A673 (cell line): ENCODE measurements at regions of chr16 and their contacts with region 1.

Region 1: DNA sequence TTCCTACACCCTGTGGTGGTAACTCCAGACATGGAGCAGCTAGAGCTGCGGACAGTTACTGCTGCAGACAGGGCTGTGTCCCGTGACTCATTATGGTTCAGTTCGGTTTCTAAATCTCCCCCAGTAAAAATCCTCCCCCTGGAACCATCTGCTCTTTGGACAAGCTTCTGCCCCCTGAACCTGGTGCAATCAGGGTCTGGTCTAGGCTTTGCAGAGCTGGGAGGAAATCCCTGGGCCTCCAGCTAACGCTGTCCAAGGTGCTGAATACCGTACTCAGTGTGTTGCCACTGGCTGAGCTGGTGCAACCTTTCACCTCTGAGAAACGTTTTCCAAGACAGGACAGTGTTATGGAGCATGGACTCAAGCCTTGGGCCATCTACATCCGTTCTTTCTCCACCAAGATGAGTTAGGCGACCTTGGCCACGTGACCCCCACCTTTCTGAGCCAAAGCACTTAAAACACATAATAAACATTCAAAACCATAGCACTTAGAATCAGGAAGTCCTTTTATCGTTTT is 142.0 kb downstream of the CPPED1 start:
- DNase-seq: peak; percentile 25
- H3K4me3 ChIP-seq: no peak overlapping the region
- H3K27ac ChIP-seq: no peak overlapping the region
- H3K4me1 ChIP-seq: no peaks in the 10 kb centered on the region
- H3K27me3 ChIP-seq: no peaks in the 10 kb centered on the region
- CTCF ChIP-seq: no peak

Region 2: GRCh38 chr16:12590963-12591362 is 70.8 kb before region 1 on chr16:
- CTCF ChIA-PET with region 1: no interaction called
- POLR2A ChIA-PET with region 1: no interaction called
- intact Hi-C with region 1: no loop called
- DNase-seq: no peak
- H3K4me3 ChIP-seq: no peak overlapping the region
- H3K27ac ChIP-seq: no peak overlapping the region
- H3K4me1 ChIP-seq: no peaks in the 10 kb centered on the region
- H3K27me3 ChIP-seq: no peaks in the 10 kb centered on the region
- CTCF ChIP-seq: no peak

Region 3: GRCh38 chr16:12614662-12615278 is 46.9 kb before region 1 on chr16:
- CTCF ChIA-PET with region 1: no interaction called
- POLR2A ChIA-PET with region 1: no interaction called
- intact Hi-C with region 1: no loop called
- DNase-seq: no peak
- H3K4me3 ChIP-seq: no peak overlapping the region
- H3K27ac ChIP-seq: no peak overlapping the region
- H3K4me1 ChIP-seq: no peaks in the 10 kb centered on the region
- H3K27me3 ChIP-seq: no peaks in the 10 kb centered on the region
- CTCF ChIP-seq: no peak

Region 4: GRCh38 chr16:12625068-12625467 is 36.6 kb before region 1 on chr16:
- CTCF ChIA-PET with region 1: no interaction called
- POLR2A ChIA-PET with region 1: no interaction called
- intact Hi-C with region 1: no loop called
- DNase-seq: no peak
- H3K4me3 ChIP-seq: no peak overlapping the region
- H3K27ac ChIP-seq: no peak overlapping the region
- H3K4me1 ChIP-seq: no peaks in the 10 kb centered on the region
- H3K27me3 ChIP-seq: no peaks in the 10 kb centered on the region
- CTCF ChIP-seq: no peak

Region 5: DNA sequence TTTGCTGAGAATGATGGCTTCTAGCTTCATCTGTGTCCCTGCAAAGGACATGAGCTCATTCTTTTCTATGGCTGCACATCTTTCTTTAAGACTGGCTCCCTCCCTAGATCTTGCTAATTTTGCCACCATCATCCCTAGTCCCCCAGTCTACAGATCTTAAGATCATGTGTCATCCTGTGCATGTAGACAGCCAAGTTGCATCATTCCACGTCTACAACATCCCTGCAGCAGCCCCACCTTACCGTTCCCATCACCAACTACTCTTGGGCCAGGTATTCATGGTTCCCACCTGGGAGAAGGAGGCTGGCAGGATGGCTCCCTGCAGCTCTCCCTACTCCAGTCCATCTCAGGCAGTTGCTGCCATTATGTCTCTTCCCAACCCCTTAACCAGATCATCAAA is 129.6 kb after region 1 on chr16:
- CTCF ChIA-PET with region 1: no interaction called
- POLR2A ChIA-PET with region 1: interaction called, 10 read pairs
- intact Hi-C with region 1: no loop called
- DNase-seq: no peak
- H3K4me3 ChIP-seq: no peak overlapping the region
- H3K27ac ChIP-seq: no peak overlapping the region
- H3K4me1 ChIP-seq: no peaks in the 10 kb centered on the region
- H3K27me3 ChIP-seq: no peaks in the 10 kb centered on the region
- CTCF ChIP-seq: no peak

Region 6: DNA sequence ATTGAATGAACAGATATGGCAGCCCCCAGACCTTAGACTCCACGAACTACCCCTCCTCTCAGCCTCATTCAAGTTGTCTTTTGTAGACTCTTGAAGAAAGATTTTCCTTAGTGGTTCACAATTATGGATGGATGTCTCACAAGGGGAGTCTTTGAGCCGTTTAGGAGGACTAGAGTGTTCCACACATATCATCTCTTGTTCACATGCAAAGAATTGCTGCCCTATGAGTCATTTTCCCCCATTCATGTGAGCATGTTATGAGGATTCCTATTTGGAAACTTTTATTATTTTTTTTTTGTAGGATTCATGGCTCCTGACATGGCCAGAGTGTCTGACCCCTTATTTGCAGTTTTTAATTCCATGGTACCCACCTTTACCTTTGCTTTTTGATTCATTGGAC is 476.8 kb after region 1 on chr16:
- CTCF ChIA-PET with region 1: no interaction called
- POLR2A ChIA-PET with region 1: no interaction called
- intact Hi-C with region 1: no loop called
- DNase-seq: no peak
- H3K4me3 ChIP-seq: no peak overlapping the region
- H3K27ac ChIP-seq: no peak overlapping the region
- H3K4me1 ChIP-seq: no peaks in the 10 kb centered on the region
- H3K27me3 ChIP-seq: no peaks in the 10 kb centered on the region
- CTCF ChIP-seq: no peak